Caco-2 (cell line): ENCODE measurements at regions of chr10 and their contacts with region 1.

Region 1: DNA sequence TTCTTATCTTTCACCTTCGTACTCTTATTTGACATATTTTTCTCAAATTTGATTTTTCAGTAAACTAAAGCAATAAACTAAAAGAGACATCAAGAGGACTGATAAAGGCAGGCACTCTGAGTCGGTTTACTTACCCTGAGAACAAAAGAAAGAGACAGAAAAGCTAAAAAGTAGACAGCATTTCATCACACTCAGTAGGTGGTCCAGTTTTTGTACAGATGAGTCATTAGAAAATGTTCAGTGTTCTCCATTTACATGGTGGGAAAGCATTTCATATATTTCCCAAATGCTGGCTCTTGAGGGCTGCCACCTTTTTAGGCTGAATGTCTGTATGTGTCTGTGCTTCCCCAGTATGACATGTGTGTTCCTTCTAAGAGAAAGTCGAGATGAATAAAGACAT is 52.7 kb downstream of the NHLRC2 start:
- DNase-seq: no peak
- H3K4me3 ChIP-seq: no peak overlapping the region
- H3K4me3 Mint-ChIP-seq: peak overlapping the region; percentile 39
- H3K27ac Mint-ChIP-seq: peak overlapping the region; percentile 46
- H3K4me1 ChIP-seq: peaks cover 40% of the 10 kb centered on the region
- H3K4me1 Mint-ChIP-seq: peaks cover 19% of the 10 kb centered on the region
- H3K27me3 ChIP-seq: no peaks in the 10 kb centered on the region
- H3K27me3 Mint-ChIP-seq: no peaks in the 10 kb centered on the region
- CTCF ChIP-seq: no peak

Region 2: GRCh38 chr10:113735921-113736320 is 171.2 kb before region 1 on chr10:
- CTCF ChIA-PET with region 1: no interaction called
- POLR2A ChIA-PET with region 1: no interaction called
- intact Hi-C with region 1: no loop called
- DNase-seq: peak; percentile 61 to 64
- H3K4me3 ChIP-seq: no peak overlapping the region
- H3K4me3 Mint-ChIP-seq: no peak overlapping the region
- H3K27ac Mint-ChIP-seq: no peak overlapping the region
- H3K4me1 ChIP-seq: peaks cover 9% of the 10 kb centered on the region
- H3K4me1 Mint-ChIP-seq: no peaks in the 10 kb centered on the region
- H3K27me3 ChIP-seq: no peaks in the 10 kb centered on the region
- H3K27me3 Mint-ChIP-seq: no peaks in the 10 kb centered on the region
- CTCF ChIP-seq: peak; percentile 22 to 46

Region 3: GRCh38 chr10:113891476-113891875 is 15.7 kb before region 1 on chr10:
- CTCF ChIA-PET with region 1: no interaction called
- POLR2A ChIA-PET with region 1: no interaction called
- intact Hi-C with region 1: loop called (anchors 2 kb)
- DNase-seq: peak; percentile 41 to 42
- H3K4me3 ChIP-seq: no peak overlapping the region
- H3K4me3 Mint-ChIP-seq: no peak overlapping the region
- H3K27ac Mint-ChIP-seq: peak overlapping the region; percentile 37
- H3K4me1 ChIP-seq: peaks cover 30% of the 10 kb centered on the region
- H3K4me1 Mint-ChIP-seq: peaks cover 39% of the 10 kb centered on the region
- H3K27me3 ChIP-seq: no peaks in the 10 kb centered on the region
- H3K27me3 Mint-ChIP-seq: no peaks in the 10 kb centered on the region
- CTCF ChIP-seq: no peak